ENCODE measurements at regions of chr11 and their contacts with region 1.

Region 1: GRCh38 chr11:62427630-62428233 is 8.9 kb downstream of the SCGB1A1 start:
- DNase-seq: peak; percentile 41
- ATAC-seq: peak; percentile 76
- H3K4me3 ChIP-seq: no peak overlapping the region
- H3K27ac ChIP-seq: no peak overlapping the region
- H3K4me1 ChIP-seq: peaks cover 7% of the 10 kb centered on the region
- H3K27me3 ChIP-seq: no peaks in the 10 kb centered on the region; a peak in 1 of 4 replicates
- CTCF ChIP-seq: no peak
- EP300 ChIP-seq: peak; percentile 22 to 26; a peak in 2 of 4 replicates
- POLR2A ChIP-seq: no peak
- RAD21 ChIP-seq: no peak

Region 2: GRCh38 chr11:62444236-62444833 is 16.6 kb after region 1 on chr11:
- CTCF ChIA-PET with region 1: interaction called, 10 read pairs
- POLR2A ChIA-PET with region 1: interaction called, 6 read pairs
- RAD21 ChIA-PET with region 1: interaction called, 7 read pairs
- SMC1A ChIA-PET with region 1: interaction called, 4 read pairs
- in situ Hi-C with region 1: no loop called
- intact Hi-C with region 1: no loop called
- DNase-seq: peak; percentile 16
- ATAC-seq: peak; percentile 83
- H3K4me3 ChIP-seq: peak overlapping the region; percentile 37; the same call in 1 of the 2 replicates
- H3K27ac ChIP-seq: no peak overlapping the region
- H3K4me1 ChIP-seq: no peaks in the 10 kb centered on the region
- H3K27me3 ChIP-seq: peaks cover 0 to 3% of the 10 kb centered on the region in 2 experiments; a peak in 1 of 4 replicates
- CTCF ChIP-seq: no peak
- EP300 ChIP-seq: no peak
- POLR2A ChIP-seq: no peak
- RAD21 ChIP-seq: no peak

Region 3: DNA sequence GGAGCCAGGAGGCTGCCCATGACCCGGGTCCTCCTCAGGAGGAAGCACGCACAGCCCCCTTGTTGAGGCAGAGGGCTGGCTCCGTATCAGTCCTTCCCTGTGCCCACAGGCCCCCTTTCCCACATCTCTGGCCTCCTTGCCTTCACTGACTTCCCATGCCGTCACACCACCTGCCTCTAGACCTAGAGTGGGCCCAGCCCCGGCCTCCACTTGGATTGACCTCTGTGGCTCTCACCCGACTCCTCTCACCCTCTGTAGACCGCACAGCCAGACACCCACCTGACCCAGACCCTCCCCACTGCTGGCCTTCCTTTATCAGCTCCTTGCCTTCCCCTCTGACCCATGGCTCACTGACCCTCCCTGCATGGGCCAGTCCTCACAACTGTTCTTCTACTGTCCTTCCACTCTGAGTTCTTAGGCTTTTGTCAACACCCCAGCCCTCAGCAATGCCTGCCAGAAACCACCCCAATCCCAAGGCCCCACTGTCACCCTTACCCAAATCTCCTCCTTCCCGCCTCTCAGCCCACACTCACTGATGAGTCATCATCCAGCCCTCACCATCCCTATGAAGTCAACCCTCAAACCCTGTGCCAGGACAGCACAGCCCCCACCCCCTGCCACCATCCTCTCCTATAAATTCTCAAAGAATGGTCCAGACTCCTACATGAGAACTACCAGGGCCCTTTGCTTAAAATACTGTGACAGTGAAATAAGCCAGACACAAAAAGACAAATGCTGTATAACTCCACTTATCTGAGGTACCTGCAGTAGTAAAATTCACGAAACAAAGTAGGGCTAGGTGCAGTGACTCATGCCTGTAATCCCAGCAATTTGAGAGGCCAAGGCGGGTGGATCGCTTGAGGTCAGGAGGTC is 44.5 kb after region 1 on chr11:
- CTCF ChIA-PET with region 1: interaction called, 10 read pairs
- POLR2A ChIA-PET with region 1: no interaction called
- RAD21 ChIA-PET with region 1: interaction called, 6 read pairs
- SMC1A ChIA-PET with region 1: no interaction called
- in situ Hi-C with region 1: no loop called
- intact Hi-C with region 1: no loop called
- DNase-seq: no peak
- ATAC-seq: no peak
- H3K4me3 ChIP-seq: no peak overlapping the region
- H3K27ac ChIP-seq: no peak overlapping the region
- H3K4me1 ChIP-seq: no peaks in the 10 kb centered on the region
- H3K27me3 ChIP-seq: no peaks in the 10 kb centered on the region; a peak in 1 of 4 replicates
- CTCF ChIP-seq: no peak
- EP300 ChIP-seq: no peak
- POLR2A ChIP-seq: no peak
- RAD21 ChIP-seq: no peak

Region 4: GRCh38 chr11:62556108-62556871 is 128.6 kb after region 1 on chr11:
- CTCF ChIA-PET with region 1: interaction called, 98 read pairs
- POLR2A ChIA-PET with region 1: interaction called, 9 read pairs
- RAD21 ChIA-PET with region 1: interaction called, 74 read pairs
- SMC1A ChIA-PET with region 1: interaction called, 94 read pairs
- in situ Hi-C with region 1: loop called (anchors 10 kb)
- intact Hi-C with region 1: loop called (anchors 1 kb)
- DNase-seq: peak; percentile 88
- ATAC-seq: peak; percentile 74
- H3K4me3 ChIP-seq: peak overlapping the region; percentile 42
- H3K27ac ChIP-seq: peak overlapping the region; percentile 99
- H3K4me1 ChIP-seq: peaks cover 88% of the 10 kb centered on the region
- H3K27me3 ChIP-seq: no peaks in the 10 kb centered on the region
- CTCF ChIP-seq: no peak
- EP300 ChIP-seq: peak in 1 of 2 experiments; percentile 11; a peak in 1 of 4 replicates
- POLR2A ChIP-seq: peak; percentile 66; the same call in 1 of the 2 replicates
- RAD21 ChIP-seq: no peak

Region 5: GRCh38 chr11:62573592-62574362 is 146.0 kb after region 1 on chr11 and contains the start of gene EEF1G:
- CTCF ChIA-PET with region 1: interaction called, 12 read pairs
- POLR2A ChIA-PET with region 1: no interaction called
- RAD21 ChIA-PET with region 1: interaction called, 13 read pairs
- SMC1A ChIA-PET with region 1: interaction called, 4 read pairs
- in situ Hi-C with region 1: no loop called
- intact Hi-C with region 1: no loop called
- DNase-seq: peak; percentile 99
- ATAC-seq: peak; percentile 96
- H3K4me3 ChIP-seq: peak within 1 kb of the TSS; percentile 99
- H3K27ac ChIP-seq: peak within 1 kb of the TSS; percentile 93
- H3K4me1 ChIP-seq: peaks cover 24% of the 10 kb centered on the region
- H3K27me3 ChIP-seq: no peaks in the 10 kb centered on the region
- CTCF ChIP-seq: no peak
- EP300 ChIP-seq: peak in 1 of 2 experiments; percentile 51; a peak in 1 of 4 replicates
- POLR2A ChIP-seq: peak; percentile 93
- RAD21 ChIP-seq: no peak
- polyA plus RNA-seq, gene EEF1G: 1,227 to 1,233 TPM

Region 6: DNA sequence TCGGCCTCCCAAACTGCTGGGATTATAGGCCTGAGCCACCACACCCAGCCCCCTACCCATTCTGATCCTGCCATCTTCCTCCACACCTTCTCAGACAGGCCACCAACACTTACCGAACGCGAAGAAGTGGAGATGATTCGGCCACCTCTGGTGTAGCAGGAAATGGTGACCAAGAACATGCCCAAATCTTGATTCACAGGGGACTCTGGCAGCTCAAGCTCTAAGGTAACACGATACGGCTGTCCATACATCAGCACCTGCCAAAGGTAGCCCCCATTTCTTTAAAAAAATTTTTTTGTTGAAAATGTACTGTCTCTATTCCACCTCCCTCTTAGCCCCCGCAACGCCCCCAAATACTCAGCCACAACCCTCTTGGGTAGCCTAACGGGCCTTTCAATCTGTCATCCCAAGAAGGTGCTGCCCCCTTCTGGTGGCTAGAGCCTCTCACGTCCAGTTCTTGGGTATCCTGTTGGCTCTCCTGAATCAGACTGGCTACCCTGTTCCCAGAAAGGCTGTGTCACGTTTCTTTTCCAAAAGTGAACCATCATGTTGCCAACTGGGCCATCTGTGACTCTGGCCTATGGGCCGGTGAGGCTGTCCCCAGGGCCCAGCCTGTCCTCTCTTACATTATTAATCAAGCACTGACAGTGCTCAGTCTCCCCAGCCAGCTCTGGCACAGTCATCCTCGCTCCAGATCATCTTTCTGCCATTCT is 266.9 kb after region 1 on chr11:
- CTCF ChIA-PET with region 1: interaction called, 19 read pairs
- POLR2A ChIA-PET with region 1: interaction called, 5 read pairs
- RAD21 ChIA-PET with region 1: interaction called, 18 read pairs
- SMC1A ChIA-PET with region 1: interaction called, 17 read pairs
- in situ Hi-C with region 1: loop called (anchors 10 kb)
- intact Hi-C with region 1: loop called (anchors 1 kb)
- DNase-seq: no peak
- ATAC-seq: peak; percentile 99
- H3K4me3 ChIP-seq: no peak overlapping the region
- H3K27ac ChIP-seq: no peak overlapping the region
- H3K4me1 ChIP-seq: no peaks in the 10 kb centered on the region
- H3K27me3 ChIP-seq: no peaks in the 10 kb centered on the region
- CTCF ChIP-seq: peak; percentile 79 to 86 (median 82)
- EP300 ChIP-seq: no peak
- POLR2A ChIP-seq: no peak
- RAD21 ChIP-seq: peak; percentile 83

Measured in GM12878 (cell line).